GM12878 (cell line): ENCODE measurements at regions of chr2 and their contacts with region 1.

Region 1: GRCh38 chr2:10900216-10901109 is 11.3 kb upstream of the KCNF1 start:
- DNase-seq: no peak
- ATAC-seq: peak; percentile 83
- H3K4me3 ChIP-seq: no peak overlapping the region
- H3K27ac ChIP-seq: no peak overlapping the region
- H3K4me1 ChIP-seq: no peaks in the 10 kb centered on the region
- H3K27me3 ChIP-seq: peaks cover 0 to 3% of the 10 kb centered on the region in 2 experiments; a peak in 1 of 4 replicates
- CTCF ChIP-seq: peak; percentile 39 to 49 (median 40); a peak in 5 of 6 replicates
- EP300 ChIP-seq: no peak
- POLR2A ChIP-seq: no peak
- RAD21 ChIP-seq: peak; percentile 45

Region 2: DNA sequence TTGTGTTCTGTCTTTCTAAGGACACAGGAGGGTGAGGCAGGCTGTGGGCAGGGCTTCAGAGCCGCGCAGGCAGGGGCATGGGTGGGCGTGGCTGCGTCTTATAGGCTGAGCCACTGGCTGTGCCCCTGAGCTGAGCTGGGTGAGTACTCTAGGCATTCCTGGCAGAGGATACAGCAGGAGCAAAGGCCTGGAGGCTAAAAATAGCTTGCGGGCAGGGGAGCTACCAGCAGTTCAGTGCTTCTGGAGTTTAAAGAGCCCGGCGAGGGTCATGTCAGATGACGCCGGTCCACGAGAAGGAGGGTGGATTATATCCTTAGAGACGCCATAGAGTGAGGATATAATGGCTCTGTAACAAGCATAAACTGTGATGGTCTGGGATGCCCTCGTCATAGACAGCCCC is 56.4 kb before region 1 on chr2:
- CTCF ChIA-PET with region 1: interaction called, 87 read pairs
- POLR2A ChIA-PET with region 1: no interaction called
- RAD21 ChIA-PET with region 1: interaction called, 9 read pairs
- SMC1A ChIA-PET with region 1: no interaction called
- in situ Hi-C with region 1: loop called (anchors 5 kb)
- intact Hi-C with region 1: loop called (anchors 5 kb)
- DNase-seq: no peak
- ATAC-seq: no peak
- H3K4me3 ChIP-seq: no peak overlapping the region
- H3K27ac ChIP-seq: no peak overlapping the region
- H3K4me1 ChIP-seq: no peaks in the 10 kb centered on the region
- H3K27me3 ChIP-seq: no peaks in the 10 kb centered on the region; a peak in 2 of 4 replicates
- CTCF ChIP-seq: no peak
- EP300 ChIP-seq: no peak
- POLR2A ChIP-seq: no peak
- RAD21 ChIP-seq: no peak

Region 3: GRCh38 chr2:10864861-10865636 is 35.4 kb before region 1 on chr2:
- CTCF ChIA-PET with region 1: interaction called, 10 read pairs
- POLR2A ChIA-PET with region 1: no interaction called
- RAD21 ChIA-PET with region 1: interaction called, 5 read pairs
- SMC1A ChIA-PET with region 1: interaction called, 19 read pairs
- in situ Hi-C with region 1: no loop called
- intact Hi-C with region 1: no loop called
- DNase-seq: peak; percentile 66
- ATAC-seq: peak; percentile 95
- H3K4me3 ChIP-seq: peak overlapping the region; percentile 43; the same call in 1 of the 2 replicates
- H3K27ac ChIP-seq: no peak overlapping the region
- H3K4me1 ChIP-seq: peaks cover 31% of the 10 kb centered on the region
- H3K27me3 ChIP-seq: peaks cover 0 to 4% of the 10 kb centered on the region in 2 experiments; a peak in 3 of 4 replicates
- CTCF ChIP-seq: peak; percentile 31 to 72 (median 55); a peak in 5 of 6 replicates
- EP300 ChIP-seq: no peak
- POLR2A ChIP-seq: no peak
- RAD21 ChIP-seq: peak; percentile 33; the same call in 1 of the 2 replicates

Region 4: GRCh38 chr2:10873790-10874437 is 26.5 kb before region 1 on chr2:
- CTCF ChIA-PET with region 1: interaction called, 13 read pairs
- POLR2A ChIA-PET with region 1: no interaction called
- RAD21 ChIA-PET with region 1: interaction called, 8 read pairs
- SMC1A ChIA-PET with region 1: interaction called, 4 read pairs
- in situ Hi-C with region 1: no loop called
- intact Hi-C with region 1: no loop called
- DNase-seq: no peak
- ATAC-seq: peak; percentile 61
- H3K4me3 ChIP-seq: no peak overlapping the region
- H3K27ac ChIP-seq: peak overlapping the region; percentile 3; the same call in 1 of the 2 replicates
- H3K4me1 ChIP-seq: peaks cover 2% of the 10 kb centered on the region
- H3K27me3 ChIP-seq: peaks cover 2 to 4% of the 10 kb centered on the region in 2 experiments; a peak in 3 of 4 replicates
- CTCF ChIP-seq: no peak
- EP300 ChIP-seq: no peak
- POLR2A ChIP-seq: no peak
- RAD21 ChIP-seq: no peak

Region 5: GRCh38 chr2:10977003-10977402 is 76.5 kb after region 1 on chr2:
- CTCF ChIA-PET with region 1: no interaction called
- POLR2A ChIA-PET with region 1: no interaction called
- RAD21 ChIA-PET with region 1: no interaction called
- SMC1A ChIA-PET with region 1: no interaction called
- in situ Hi-C with region 1: no loop called
- intact Hi-C with region 1: no loop called
- DNase-seq: no peak
- ATAC-seq: no peak
- H3K4me3 ChIP-seq: no peak overlapping the region
- H3K27ac ChIP-seq: no peak overlapping the region
- H3K4me1 ChIP-seq: no peaks in the 10 kb centered on the region
- H3K27me3 ChIP-seq: peaks cover 0 to 4% of the 10 kb centered on the region in 2 experiments; a peak in 3 of 4 replicates
- CTCF ChIP-seq: no peak
- EP300 ChIP-seq: no peak
- POLR2A ChIP-seq: no peak
- RAD21 ChIP-seq: no peak